ENCODE measurements at regions of chr11 and their contacts with region 1.

Region 1: GRCh38 chr11:65662799-65663638 is at the start of gene RELA:
- DNase-seq: peak; percentile 81
- ATAC-seq: peak; percentile 84
- H3K4me3 ChIP-seq: peak within 1 kb of the TSS; percentile 81 to 94 (median 88)
- H3K27ac ChIP-seq: peak within 1 kb of the TSS; percentile 86
- H3K4me1 ChIP-seq: peaks cover 10% of the 10 kb centered on the region
- H3K27me3 ChIP-seq: no peaks in the 10 kb centered on the region; a peak in 1 of 5 replicates
- CTCF ChIP-seq: no peak
- EP300 ChIP-seq: no peak
- POLR2A ChIP-seq: peak; percentile 53 to 81
- RAD21 ChIP-seq: no peak; the same call in 1 of the 2 replicates
- total RNA-seq, gene RELA: 18.7 and 21.4 TPM in 2 replicates

Region 2: DNA sequence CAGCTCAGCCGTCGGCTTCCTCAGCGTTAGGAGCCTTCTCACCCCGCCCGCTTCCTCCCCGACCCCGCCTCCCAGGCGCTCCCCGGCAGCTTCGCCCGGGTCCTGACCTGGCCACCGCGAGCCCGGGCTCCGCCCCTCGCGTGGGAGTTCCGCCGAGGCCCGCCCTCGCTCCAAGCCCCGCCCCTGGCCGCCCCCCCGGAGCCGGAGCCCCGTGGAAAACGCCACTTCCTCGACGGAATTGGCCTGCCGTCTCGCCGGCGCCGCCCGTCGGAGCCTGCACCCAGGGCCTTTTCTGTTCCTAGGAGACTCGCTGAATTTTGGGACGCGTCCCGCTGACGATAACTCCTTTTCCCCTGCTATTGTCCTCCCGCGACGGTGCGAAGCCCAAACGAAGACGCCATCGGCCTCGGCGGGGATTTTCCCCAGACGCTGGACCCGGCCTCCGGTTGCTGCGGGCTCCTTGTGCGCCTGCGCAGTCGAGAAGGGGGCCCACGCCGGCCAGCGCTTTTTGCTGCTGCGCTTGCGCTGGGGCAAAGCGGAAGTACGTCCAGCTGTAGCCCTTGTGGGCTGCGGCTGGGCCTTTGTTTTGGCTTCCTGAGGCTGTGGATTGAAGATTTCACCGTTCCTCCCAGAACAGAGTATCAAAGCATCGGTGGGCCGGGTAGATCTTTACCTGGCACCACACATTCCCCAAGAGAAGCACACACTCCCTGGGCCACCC is 10.3 kb before region 1 on chr11:
- CTCF ChIA-PET with region 1: no interaction called
- POLR2A ChIA-PET with region 1: interaction called, 57 read pairs
- in situ Hi-C with region 1: no loop called
- intact Hi-C with region 1: no loop called
- DNase-seq: peak; percentile 86
- ATAC-seq: peak; percentile 77
- H3K4me3 ChIP-seq: peak overlapping the region; percentile 48 to 76 (median 54); a peak in 5 of 6 replicates
- H3K27ac ChIP-seq: peak overlapping the region; percentile 98
- H3K4me1 ChIP-seq: peaks cover 35% of the 10 kb centered on the region
- H3K27me3 ChIP-seq: no peaks in the 10 kb centered on the region
- CTCF ChIP-seq: no peak
- EP300 ChIP-seq: no peak
- POLR2A ChIP-seq: peak; percentile 48 to 53; a peak in 3 of 4 replicates
- RAD21 ChIP-seq: peak; percentile 8; the same call in 1 of the 2 replicates